Activated T-helper 2 cell treated with anti-CD3 and anti-CD28 coated beads, Interferon-gamma antibody, Interleukin-2, Interleukin-4, amounts not matched to agents 10 μg/mL and 5 μg/mL and 100 μg/mL, durations not matched to agents 14 hours and 24 hours and 36 hours (primary cell): ENCODE measurements at regions of chr10 and their contacts with region 1.

Region 1: DNA sequence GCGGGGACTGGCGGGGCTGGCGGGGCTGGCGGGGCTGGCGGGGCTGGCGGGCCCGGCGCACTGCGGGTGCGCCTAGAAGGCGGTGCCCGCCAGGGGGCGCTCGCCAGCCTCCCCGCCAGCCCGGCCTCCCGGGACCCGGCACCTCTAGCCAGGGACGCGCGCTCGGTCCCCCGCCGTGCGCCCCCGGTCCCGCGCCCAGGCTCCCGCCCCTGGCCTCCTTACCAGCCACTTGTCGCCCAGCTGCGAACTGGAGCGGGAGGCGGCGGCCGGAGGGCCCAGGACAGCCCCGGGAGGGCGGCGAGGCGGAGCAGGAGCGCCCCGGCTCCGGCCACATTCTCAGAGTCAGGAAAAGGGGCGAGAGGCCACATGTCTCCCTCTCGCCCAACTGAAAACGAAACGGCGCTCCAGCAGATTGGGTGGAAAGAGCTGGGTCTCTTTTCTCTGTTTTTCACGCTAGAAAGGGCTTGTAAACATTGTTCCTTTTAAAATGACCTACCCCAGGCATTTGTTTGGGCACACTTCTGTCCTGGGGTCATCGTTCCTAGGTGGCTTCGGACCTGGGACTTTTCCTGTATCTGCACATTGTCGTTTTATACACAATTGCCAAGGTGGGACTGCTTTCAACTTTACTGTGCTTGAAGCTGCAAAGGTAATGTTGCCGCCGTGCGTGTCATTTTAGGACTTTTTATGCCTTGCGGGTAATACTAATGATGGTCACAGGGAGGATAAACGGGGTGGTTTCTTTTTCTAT is 378 bp upstream of the PRKCQ start:
- DNase-seq: peak; percentile 81
- H3K4me3 Mint-ChIP-seq: peak overlapping the region; percentile 95
- H3K27ac Mint-ChIP-seq: peak overlapping the region; percentile 89
- H3K4me1 Mint-ChIP-seq: peaks cover 68% of the 10 kb centered on the region
- H3K27me3 Mint-ChIP-seq: no peaks in the 10 kb centered on the region

Region 2: GRCh38 chr10:6202684-6203330 is 377.6 kb before region 1 on chr10 and contains the start of gene PFKFB3:
- intact Hi-C with region 1: loop called (anchors 10 kb)
- DNase-seq: peak; percentile 89
- H3K4me3 Mint-ChIP-seq: peak within 1 kb of the TSS; percentile 100
- H3K27ac Mint-ChIP-seq: peak within 1 kb of the TSS; percentile 93
- H3K4me1 Mint-ChIP-seq: peaks cover 31% of the 10 kb centered on the region
- H3K27me3 Mint-ChIP-seq: no peaks in the 10 kb centered on the region
- total RNA-seq, gene PFKFB3: 124 and 126 TPM in 2 replicates

Region 3: GRCh38 chr10:6473901-6474370 is 106.5 kb before region 1 on chr10:
- intact Hi-C with region 1: loop called (anchors 1 kb)
- DNase-seq: no peak
- H3K4me3 Mint-ChIP-seq: peak overlapping the region; percentile 83
- H3K27ac Mint-ChIP-seq: peak overlapping the region; percentile 95
- H3K4me1 Mint-ChIP-seq: peaks cover 60% of the 10 kb centered on the region
- H3K27me3 Mint-ChIP-seq: no peaks in the 10 kb centered on the region

Region 4: DNA sequence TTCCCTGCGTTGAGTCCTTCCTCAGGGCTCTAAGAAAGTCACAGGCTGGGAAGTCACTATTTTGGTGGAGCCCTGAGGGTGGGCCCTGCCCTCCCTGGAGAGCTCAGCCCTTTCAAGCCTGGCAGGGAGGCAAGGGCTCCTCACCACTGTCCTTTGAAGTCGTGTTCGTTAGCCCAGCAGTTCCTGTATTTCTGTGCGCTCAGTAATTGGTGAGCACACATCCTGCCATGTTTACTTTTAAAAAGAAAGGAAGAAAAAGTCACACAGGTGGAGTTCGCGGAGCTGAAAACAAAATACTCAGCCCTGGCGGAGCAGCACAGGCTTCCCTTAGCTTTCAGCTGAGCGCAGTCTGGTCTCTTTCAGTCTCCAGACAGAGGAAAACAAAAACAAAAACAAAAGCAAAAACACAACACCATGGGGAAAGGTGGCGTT is 37.4 kb before region 1 on chr10:
- intact Hi-C with region 1: loop called (anchors 1 kb)
- DNase-seq: no peak
- H3K4me3 Mint-ChIP-seq: peak overlapping the region; percentile 89
- H3K27ac Mint-ChIP-seq: peak overlapping the region; percentile 100
- H3K4me1 Mint-ChIP-seq: peaks cover 65% of the 10 kb centered on the region
- H3K27me3 Mint-ChIP-seq: no peaks in the 10 kb centered on the region

Region 5: GRCh38 chr10:6607778-6608177 is 27.3 kb after region 1 on chr10:
- intact Hi-C with region 1: loop called (anchors 1 kb)
- DNase-seq: no peak
- H3K4me3 Mint-ChIP-seq: no peak overlapping the region
- H3K27ac Mint-ChIP-seq: no peak overlapping the region
- H3K4me1 Mint-ChIP-seq: peaks cover 69% of the 10 kb centered on the region
- H3K27me3 Mint-ChIP-seq: no peaks in the 10 kb centered on the region